Cardiac septum (tissue), 1 donor: ENCODE measurements at regions of chr6 and their contacts with region 1.

Region 1: GRCh38 chr6:121436960-121437850 is 1.8 kb downstream of the GJA1 start:
- DNase-seq: peak; percentile 79

Region 2: GRCh38 chr6:121652726-121653623 is 215.8 kb after region 1 on chr6:
- intact Hi-C with region 1: loop called (anchors 5 kb)
- DNase-seq: no peak

Region 3: GRCh38 chr6:121666814-121667213 is 229.6 kb after region 1 on chr6:
- intact Hi-C with region 1: loop called (anchors 5 kb)
- DNase-seq: no peak

Region 4: GRCh38 chr6:121771937-121772720 is 334.9 kb after region 1 on chr6:
- intact Hi-C with region 1: loop called (anchors 5 kb)
- DNase-seq: no peak

Region 5: GRCh38 chr6:121849477-121849876 is 412.3 kb after region 1 on chr6:
- intact Hi-C with region 1: loop called (anchors 2 kb)
- DNase-seq: no peak

Region 6: GRCh38 chr6:122033539-122034181 is 596.5 kb after region 1 on chr6:
- intact Hi-C with region 1: loop called (anchors 2 kb)
- DNase-seq: no peak

Region 7: GRCh38 chr6:122129313-122130025 is 692.3 kb after region 1 on chr6:
- intact Hi-C with region 1: loop called (anchors 2 kb)
- DNase-seq: no peak